Testis (tissue), 5 donors: ENCODE measurements at regions of chr10 and their contacts with region 1.

Region 1: GRCh38 chr10:20858292-20859124 is 38.6 kb downstream of the NEBL start:
- DNase-seq: no peak
- H3K4me3 ChIP-seq: no peak overlapping the region
- H3K27ac ChIP-seq: no peak overlapping the region
- H3K4me1 ChIP-seq: no peaks in the 10 kb centered on the region
- H3K27me3 ChIP-seq: no peaks in the 10 kb centered on the region
- CTCF ChIP-seq: peak in 2 of 3 experiments; percentile 37 to 48
- POLR2A ChIP-seq: no peak

Region 2: DNA sequence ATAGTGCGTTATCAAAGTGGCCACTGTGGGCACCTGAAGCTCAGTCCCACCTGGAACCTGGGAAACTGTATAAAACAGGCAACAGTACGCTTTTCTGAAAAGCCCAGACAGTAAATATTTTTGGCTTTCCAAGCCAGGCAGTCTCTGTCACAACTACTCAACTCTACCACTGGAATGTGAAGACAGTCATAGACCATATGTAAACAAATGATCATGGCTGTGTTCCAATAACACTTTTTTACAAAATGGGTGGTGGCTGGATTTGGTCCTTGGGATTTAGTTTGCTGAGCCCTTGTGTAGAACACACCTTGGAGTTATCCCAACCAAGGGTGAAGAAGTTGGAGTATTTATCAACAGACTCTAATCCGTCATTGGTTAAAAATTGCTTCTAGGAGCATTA is 407.1 kb after region 1 on chr10:
- intact Hi-C with region 1: loop called (anchors 10 kb)
- DNase-seq: no peak
- H3K4me3 ChIP-seq: no peak overlapping the region
- H3K27ac ChIP-seq: no peak overlapping the region
- H3K4me1 ChIP-seq: no peaks in the 10 kb centered on the region
- H3K27me3 ChIP-seq: no peaks in the 10 kb centered on the region
- CTCF ChIP-seq: no peak
- POLR2A ChIP-seq: no peak